ENCODE measurements at regions of chr14 and their contacts with region 1.

Region 1: GRCh38 chr14:102125546-102125945 is 14.2 kb upstream of the WDR20 start:
- DNase-seq: peak; percentile 89
- ATAC-seq: peak; percentile 89
- H3K4me3 ChIP-seq: peak overlapping the region; percentile 49
- H3K27ac ChIP-seq: peak overlapping the region; percentile 91
- H3K4me1 ChIP-seq: peaks cover 34% of the 10 kb centered on the region
- H3K27me3 ChIP-seq: no peaks in the 10 kb centered on the region
- CTCF ChIP-seq: no peak

Region 2: GRCh38 chr14:102063091-102063802 is 62.3 kb before region 1 on chr14:
- CTCF ChIA-PET with region 1: no interaction called
- POLR2A ChIA-PET with region 1: no interaction called
- intact Hi-C with region 1: no loop called
- DNase-seq: peak; percentile 96
- ATAC-seq: peak; percentile 94
- H3K4me3 ChIP-seq: peak overlapping the region; percentile 43
- H3K27ac ChIP-seq: peak overlapping the region; percentile 31
- H3K4me1 ChIP-seq: peaks cover 8% of the 10 kb centered on the region
- H3K27me3 ChIP-seq: no peaks in the 10 kb centered on the region
- CTCF ChIP-seq: peak; percentile 69

Region 3: GRCh38 chr14:102103062-102103695 is 22.4 kb before region 1 on chr14:
- CTCF ChIA-PET with region 1: interaction called, 11 read pairs
- POLR2A ChIA-PET with region 1: interaction called, 3 read pairs
- intact Hi-C with region 1: no loop called
- DNase-seq: no peak
- ATAC-seq: no peak
- H3K4me3 ChIP-seq: no peak overlapping the region
- H3K27ac ChIP-seq: no peak overlapping the region
- H3K4me1 ChIP-seq: no peaks in the 10 kb centered on the region
- H3K27me3 ChIP-seq: no peaks in the 10 kb centered on the region
- CTCF ChIP-seq: no peak

Region 4: GRCh38 chr14:102146423-102146822 is 20.9 kb after region 1 on chr14:
- CTCF ChIA-PET with region 1: no interaction called
- POLR2A ChIA-PET with region 1: interaction called, 22 read pairs
- intact Hi-C with region 1: no loop called
- DNase-seq: no peak
- ATAC-seq: no peak
- H3K4me3 ChIP-seq: no peak overlapping the region
- H3K27ac ChIP-seq: no peak overlapping the region
- H3K4me1 ChIP-seq: peaks cover 4% of the 10 kb centered on the region; the same call in 1 of the 2 replicates
- H3K27me3 ChIP-seq: no peaks in the 10 kb centered on the region
- CTCF ChIP-seq: no peak